ENCODE measurements at regions of chr1 and their contacts with region 1.

Region 1: GRCh38 chr1:176790786-176791185 is 327.8 kb downstream of the PAPPA2 start:
- DNase-seq: no peak
- H3K4me3 ChIP-seq: no peak overlapping the region
- H3K27ac ChIP-seq: no peak overlapping the region
- H3K4me1 ChIP-seq: no peaks in the 10 kb centered on the region
- H3K27me3 ChIP-seq: no peaks in the 10 kb centered on the region
- CTCF ChIP-seq: no peak

Region 2: DNA sequence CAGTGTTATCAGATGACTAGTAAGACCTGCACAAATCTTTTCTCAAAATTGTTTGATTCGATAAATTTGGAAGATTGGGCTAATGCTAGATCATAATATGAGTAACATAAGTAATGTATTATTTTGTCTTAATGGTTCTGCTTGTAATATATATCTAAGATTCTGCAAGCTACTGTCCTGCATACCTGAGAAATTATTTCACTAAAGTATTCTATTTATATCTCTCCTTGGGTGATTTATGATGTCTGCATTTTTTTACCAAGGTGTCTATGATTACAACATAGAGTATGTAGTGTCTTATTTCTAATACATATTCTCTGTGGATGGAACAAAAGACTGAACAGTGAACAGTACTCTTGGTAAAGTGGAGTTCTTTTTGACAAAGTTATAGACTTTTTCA is 1539.4 kb after region 1 on chr1:
- CTCF ChIA-PET with region 1: no interaction called
- POLR2A ChIA-PET with region 1: interaction called, 10 read pairs
- intact Hi-C with region 1: no loop called
- DNase-seq: no peak
- H3K4me3 ChIP-seq: no peak overlapping the region
- H3K27ac ChIP-seq: no peak overlapping the region
- H3K4me1 ChIP-seq: no peaks in the 10 kb centered on the region
- H3K27me3 ChIP-seq: no peaks in the 10 kb centered on the region
- CTCF ChIP-seq: no peak